Common myeloid progenitor, CD34-positive (primary cell): ENCODE measurements at regions of chr2 and their contacts with region 1.

Region 1: DNA sequence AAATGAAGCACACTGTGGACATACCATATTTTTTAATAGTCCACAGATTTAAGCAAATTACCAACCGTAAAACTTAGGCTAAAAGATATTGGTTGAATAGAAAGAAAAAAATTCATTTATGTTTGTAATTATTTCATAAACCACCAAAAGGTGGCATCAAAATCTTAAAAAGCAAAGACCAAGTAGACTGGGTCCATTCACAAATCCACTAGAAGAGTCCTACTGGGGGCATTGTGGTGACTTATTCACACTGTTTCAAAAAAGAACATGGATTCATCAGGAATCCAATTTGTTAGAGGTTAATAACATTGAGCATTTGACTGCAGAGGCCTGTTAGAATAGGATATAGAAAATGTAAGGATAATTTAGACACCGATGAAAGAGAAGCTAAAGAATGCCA is 194.9 kb upstream of the KYNU start:
- DNase-seq: peak; percentile 22 to 43 (median 36)
- H3K4me3 ChIP-seq: no peak overlapping the region
- H3K27ac ChIP-seq: no peak overlapping the region
- H3K4me1 ChIP-seq: peaks cover 0 to 2% (median 0%) of the 10 kb centered on the region in 4 experiments
- H3K27me3 ChIP-seq: no peaks in the 10 kb centered on the region

Region 2: GRCh38 chr2:142585785-142586184 is 96.7 kb before region 1 on chr2:
- CTCF ChIA-PET with region 1: no interaction called
- POLR2A ChIA-PET with region 1: no interaction called
- DNase-seq: no peak
- H3K4me3 ChIP-seq: no peak overlapping the region
- H3K27ac ChIP-seq: no peak overlapping the region
- H3K4me1 ChIP-seq: no peaks in the 10 kb centered on the region
- H3K27me3 ChIP-seq: no peaks in the 10 kb centered on the region

Region 3: GRCh38 chr2:142974288-142975024 is 291.9 kb after region 1 on chr2:
- CTCF ChIA-PET with region 1: interaction called, 47 read pairs
- POLR2A ChIA-PET with region 1: no interaction called
- DNase-seq: peak in 2 of 3 donors; percentile 26 to 38
- H3K4me3 ChIP-seq: peak overlapping the region in 1 of 7 experiments; percentile 13
- H3K27ac ChIP-seq: peak overlapping the region in 1 of 2 experiments; percentile 22
- H3K4me1 ChIP-seq: peaks cover 0 to 10% (median 9%) of the 10 kb centered on the region in 4 experiments
- H3K27me3 ChIP-seq: no peaks in the 10 kb centered on the region

Region 4: GRCh38 chr2:142980561-142981378 is 298.2 kb after region 1 on chr2:
- CTCF ChIA-PET with region 1: interaction called, 47 read pairs
- POLR2A ChIA-PET with region 1: no interaction called
- DNase-seq: peak in 2 of 3 donors; percentile 45
- H3K4me3 ChIP-seq: no peak overlapping the region
- H3K27ac ChIP-seq: no peak overlapping the region
- H3K4me1 ChIP-seq: no peaks in the 10 kb centered on the region
- H3K27me3 ChIP-seq: no peaks in the 10 kb centered on the region